MCF 10A (cell line): ENCODE measurements at regions of chr2 and their contacts with region 1.

Region 1: GRCh38 chr2:17588031-17588430 is 47.5 kb downstream of the VSNL1 start:
- DNase-seq: peak; percentile 72
- H3K4me3 Mint-ChIP-seq: no peak overlapping the region
- H3K27ac Mint-ChIP-seq: peak overlapping the region; percentile 8
- H3K4me1 Mint-ChIP-seq: peaks cover 39% of the 10 kb centered on the region
- H3K27me3 Mint-ChIP-seq: no peaks in the 10 kb centered on the region
- CTCF ChIP-seq: no peak

Region 2: DNA sequence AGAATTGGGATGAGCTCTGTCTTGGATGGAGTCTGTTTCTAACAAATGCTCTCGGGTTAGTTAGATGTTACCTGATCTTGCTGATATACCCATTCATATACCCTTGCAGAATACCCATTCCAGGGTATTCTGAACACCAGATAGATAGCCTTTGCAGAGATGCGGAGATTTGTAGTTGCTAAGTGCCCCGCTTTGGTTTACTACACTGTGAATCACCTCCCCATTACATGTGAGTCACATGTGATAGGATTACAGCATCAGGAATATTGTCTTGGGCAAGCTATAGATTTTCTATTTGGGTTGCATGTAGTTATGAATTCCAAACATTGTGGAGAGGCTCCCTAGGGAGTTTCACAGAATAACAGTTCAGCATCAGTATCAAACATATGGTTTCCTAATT is 43.8 kb before region 1 on chr2:
- CTCF ChIA-PET with region 1: no interaction called
- POLR2A ChIA-PET with region 1: interaction called, 48 read pairs
- intact Hi-C with region 1: loop called (anchors 2 kb)
- DNase-seq: peak; percentile 68
- H3K4me3 Mint-ChIP-seq: no peak overlapping the region
- H3K27ac Mint-ChIP-seq: no peak overlapping the region
- H3K4me1 Mint-ChIP-seq: peaks cover 28% of the 10 kb centered on the region
- H3K27me3 Mint-ChIP-seq: no peaks in the 10 kb centered on the region
- CTCF ChIP-seq: no peak

Region 3: DNA sequence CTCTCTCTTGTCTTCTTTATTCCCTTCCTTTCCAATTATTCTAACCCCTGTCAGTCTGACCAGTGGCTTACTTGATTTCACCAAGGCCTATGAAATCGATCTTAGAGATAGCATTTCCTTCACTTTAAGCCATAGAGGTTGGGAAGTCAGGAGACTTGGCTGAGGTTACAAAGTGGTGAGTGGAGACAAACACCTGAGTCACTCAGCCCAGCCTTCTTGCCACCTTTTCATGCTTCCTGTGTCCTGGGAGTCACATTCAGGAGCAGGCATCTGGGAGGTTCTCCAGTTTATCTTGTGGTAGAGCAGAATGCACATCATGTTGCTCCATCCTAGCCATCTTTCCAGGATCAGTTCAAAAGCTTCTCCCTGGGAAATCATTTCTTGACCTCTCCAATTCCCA is 11.6 kb after region 1 on chr2:
- CTCF ChIA-PET with region 1: interaction called, 3 read pairs
- POLR2A ChIA-PET with region 1: interaction called, 11 read pairs
- intact Hi-C with region 1: no loop called
- DNase-seq: peak; percentile 48
- H3K4me3 Mint-ChIP-seq: no peak overlapping the region
- H3K27ac Mint-ChIP-seq: peak overlapping the region; percentile 46
- H3K4me1 Mint-ChIP-seq: peaks cover 18% of the 10 kb centered on the region
- H3K27me3 Mint-ChIP-seq: no peaks in the 10 kb centered on the region
- CTCF ChIP-seq: no peak

Region 4: GRCh38 chr2:17620280-17620679 is 32.2 kb after region 1 on chr2:
- CTCF ChIA-PET with region 1: interaction called, 3 read pairs
- POLR2A ChIA-PET with region 1: interaction called, 19 read pairs
- intact Hi-C with region 1: no loop called
- DNase-seq: peak; percentile 88
- H3K4me3 Mint-ChIP-seq: peak overlapping the region; percentile 19
- H3K27ac Mint-ChIP-seq: no peak overlapping the region
- H3K4me1 Mint-ChIP-seq: peaks cover 34% of the 10 kb centered on the region
- H3K27me3 Mint-ChIP-seq: no peaks in the 10 kb centered on the region
- CTCF ChIP-seq: no peak